ENCODE measurements at regions of chr3 and their contacts with region 1.

Region 1: DNA sequence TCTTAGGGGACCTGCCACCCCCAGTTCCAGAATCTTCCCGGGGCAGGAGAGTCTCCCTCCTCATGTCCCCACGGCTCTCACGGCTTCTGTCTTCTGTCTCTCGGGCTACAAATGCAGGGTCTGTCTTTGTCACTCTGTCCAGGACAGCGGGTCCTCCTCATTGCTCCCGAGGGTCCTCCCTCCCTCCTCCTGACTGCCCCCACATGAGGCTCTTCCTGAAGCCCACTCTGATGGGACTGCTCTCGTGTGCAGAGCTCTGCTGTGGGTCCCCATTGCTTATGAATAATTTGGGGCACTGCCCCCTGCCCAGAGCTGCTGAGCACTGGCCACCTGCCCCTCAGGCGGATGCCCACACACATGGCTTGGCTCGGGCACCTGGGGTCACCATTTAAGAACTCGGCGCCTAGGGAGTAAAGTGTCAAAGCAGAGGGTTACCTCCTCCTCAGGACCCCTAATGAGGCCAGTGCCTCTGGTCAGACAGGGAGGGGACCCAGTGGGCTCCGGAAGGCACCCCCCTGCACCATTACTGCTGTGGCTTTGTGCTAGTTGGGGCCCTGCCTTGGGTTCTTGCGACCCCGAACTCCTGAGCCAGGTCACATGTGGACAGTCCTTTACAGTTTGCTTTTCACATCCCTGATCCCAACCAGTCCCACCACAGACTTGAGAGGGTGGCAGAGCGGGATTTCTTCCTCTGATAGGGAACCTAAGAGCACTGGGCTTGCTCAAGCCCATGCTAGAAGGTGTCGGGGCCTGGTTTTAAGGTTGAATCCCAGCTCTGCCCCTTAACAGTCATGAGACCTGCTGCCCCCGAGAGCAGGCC is 22.1 kb downstream of the HDAC11 start:
- DNase-seq: no peak
- ATAC-seq: no peak
- H3K4me3 ChIP-seq: no peak overlapping the region
- H3K27ac ChIP-seq: no peak overlapping the region
- H3K4me1 ChIP-seq: peaks cover 4% of the 10 kb centered on the region
- H3K27me3 ChIP-seq: no peaks in the 10 kb centered on the region
- CTCF ChIP-seq: no peak

Region 2: GRCh38 chr3:13528217-13528867 is 26.2 kb after region 1 on chr3:
- CTCF ChIA-PET with region 1: no interaction called
- POLR2A ChIA-PET with region 1: interaction called, 12 read pairs
- in situ Hi-C with region 1: no loop called
- intact Hi-C with region 1: no loop called
- DNase-seq: no peak
- ATAC-seq: peak; percentile 82; the same call in 1 of the 2 replicates
- H3K4me3 ChIP-seq: no peak overlapping the region
- H3K27ac ChIP-seq: no peak overlapping the region
- H3K4me1 ChIP-seq: no peaks in the 10 kb centered on the region
- H3K27me3 ChIP-seq: no peaks in the 10 kb centered on the region
- CTCF ChIP-seq: no peak

Measured in Panc1 (cell line).